ENCODE measurements at regions of chr12 and their contacts with region 1.

Region 1: DNA sequence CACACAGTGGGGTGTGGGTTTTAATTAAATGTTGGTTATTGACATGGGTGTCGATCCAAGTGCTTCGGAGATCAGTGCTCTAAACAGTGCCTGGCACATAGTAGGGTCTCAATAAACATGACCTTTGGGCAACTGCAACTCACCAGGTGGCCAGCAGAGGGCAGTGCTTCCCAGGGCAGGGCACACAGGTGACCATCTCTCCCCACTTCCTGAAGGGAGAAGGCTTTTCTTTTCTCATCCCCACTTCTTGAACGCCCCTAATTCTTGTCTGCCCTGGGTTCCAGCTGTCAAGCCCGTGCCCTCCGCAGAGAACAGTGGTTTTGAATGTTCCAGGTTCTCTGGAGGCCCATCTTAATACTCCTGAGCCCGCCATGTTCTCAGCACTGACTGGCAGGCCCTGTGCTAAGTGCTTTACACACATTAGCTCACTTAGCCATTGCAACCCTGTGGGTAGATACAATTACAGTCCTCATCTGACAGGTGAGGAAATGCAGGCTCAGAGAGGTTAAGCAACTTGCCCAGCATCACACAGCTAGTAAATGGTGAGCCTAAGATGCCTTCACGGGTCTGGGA is 16.3 kb downstream of the RAPGEF3 start:
- DNase-seq: no peak
- ATAC-seq: peak; percentile 20 to 45
- H3K4me3 ChIP-seq: no peak overlapping the region
- H3K27ac ChIP-seq: no peak overlapping the region
- H3K4me1 ChIP-seq: peaks cover 14 to 25% of the 10 kb centered on the region in 2 donors
- H3K27me3 ChIP-seq: no peaks in the 10 kb centered on the region
- CTCF ChIP-seq: peak; percentile 91 to 95 (median 92)
- POLR2A ChIP-seq: no peak

Region 2: GRCh38 chr12:47707905-47708543 is 34.3 kb before region 1 on chr12:
- in situ Hi-C with region 1: no loop called
- intact Hi-C with region 1: no loop called
- DNase-seq: no peak
- ATAC-seq: no peak
- H3K4me3 ChIP-seq: no peak overlapping the region
- H3K27ac ChIP-seq: no peak overlapping the region
- H3K4me1 ChIP-seq: peaks cover 9 to 18% of the 10 kb centered on the region in 2 donors
- H3K27me3 ChIP-seq: no peaks in the 10 kb centered on the region
- CTCF ChIP-seq: no peak
- POLR2A ChIP-seq: no peak

Region 3: DNA sequence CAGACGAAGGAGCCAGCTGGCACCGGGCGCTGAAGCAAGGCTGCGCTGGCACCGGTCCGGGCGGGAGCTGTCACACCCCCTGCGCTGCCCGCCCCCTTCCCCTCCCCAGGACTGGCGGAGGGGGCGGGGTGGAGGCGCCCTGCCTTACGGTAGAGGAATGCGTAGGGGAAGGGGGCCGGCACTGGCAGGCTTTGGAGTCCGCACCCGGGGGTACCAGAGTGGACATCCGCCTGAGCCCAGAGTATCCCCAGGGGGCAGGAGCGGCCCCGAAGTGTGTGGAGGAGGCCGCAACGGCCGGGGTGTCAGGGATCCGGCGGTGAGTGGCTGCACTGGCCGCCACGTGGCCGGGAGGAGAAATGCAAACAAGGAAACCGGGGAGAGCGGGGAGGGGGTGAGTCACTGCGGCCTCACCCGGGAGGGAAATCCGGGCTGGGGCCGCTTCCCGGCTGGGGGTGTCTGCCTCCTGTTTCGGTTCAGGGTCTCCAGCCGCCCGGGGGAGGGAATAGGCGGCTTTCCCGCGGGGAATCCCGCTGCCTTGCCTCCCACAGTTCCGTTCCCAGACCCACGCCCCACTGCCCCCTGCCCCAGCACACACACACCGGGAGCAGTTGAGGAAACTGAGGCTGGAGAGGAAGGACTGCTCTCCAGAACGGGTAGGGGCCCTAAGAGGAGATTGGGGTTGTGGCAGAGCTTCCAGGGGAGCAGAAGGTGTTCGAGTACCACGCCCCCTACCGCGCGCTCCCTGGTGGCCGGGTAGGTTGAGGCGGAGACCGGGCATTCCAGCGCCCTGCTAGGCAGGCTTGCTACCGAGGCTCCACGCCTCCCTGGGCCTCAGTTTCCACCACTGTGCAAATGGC is 16.7 kb after region 1 on chr12 and contains the start of gene RAPGEF3:
- in situ Hi-C with region 1: no loop called
- intact Hi-C with region 1: loop called (anchors 2 kb)
- DNase-seq: peak; percentile 66 to 73
- ATAC-seq: peak; percentile 89
- H3K4me3 ChIP-seq: peak within 1 kb of the TSS; percentile 62 to 91 (median 72)
- H3K27ac ChIP-seq: peak within 1 kb of the TSS; percentile 50 to 90 (median 78)
- H3K4me1 ChIP-seq: peaks cover 16 to 21% of the 10 kb centered on the region in 2 donors
- H3K27me3 ChIP-seq: no peaks in the 10 kb centered on the region
- CTCF ChIP-seq: peak; percentile 28 to 70 (median 63)
- POLR2A ChIP-seq: peak; percentile 7 to 19
- total RNA-seq, gene RAPGEF3: 17.0 to 27.0 (median 22.3) TPM

Region 4: DNA sequence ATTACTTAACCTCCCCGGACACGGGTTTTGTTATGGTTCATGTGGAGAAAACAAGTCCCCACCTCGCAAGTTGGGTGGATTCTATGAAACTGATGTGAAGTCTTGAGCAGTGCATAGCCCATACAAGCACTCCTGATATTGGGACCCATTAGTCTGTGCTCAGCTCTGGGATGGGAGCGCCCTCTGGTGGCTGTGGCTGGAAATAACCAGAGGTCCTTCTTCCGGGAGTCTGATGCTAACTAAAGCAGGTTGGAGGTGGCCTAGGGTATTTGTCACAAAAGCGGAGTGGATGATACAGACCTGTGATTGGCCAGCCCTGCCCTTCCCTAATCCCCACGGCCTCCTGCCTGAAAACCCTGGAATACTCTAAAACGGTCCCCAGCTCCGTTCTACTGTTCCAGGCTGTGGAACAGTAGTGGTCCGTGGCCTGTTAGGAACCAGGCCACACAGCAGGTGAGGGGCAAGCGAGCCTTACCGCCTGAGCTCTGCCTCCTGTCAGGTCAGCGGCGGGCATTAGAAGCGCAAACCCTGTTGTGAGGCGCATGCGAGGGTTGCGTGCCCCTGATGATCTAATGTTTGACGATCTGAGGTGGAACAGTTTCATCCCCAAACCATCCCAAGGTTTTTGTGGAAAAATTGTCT is 37.1 kb after region 1 on chr12:
- in situ Hi-C with region 1: loop called in 1 of 4 experiments (anchors 5 kb)
- intact Hi-C with region 1: loop called (anchors 1 kb)
- DNase-seq: peak; percentile 69 to 81
- ATAC-seq: peak; percentile 74 to 83
- H3K4me3 ChIP-seq: no peak overlapping the region
- H3K27ac ChIP-seq: no peak overlapping the region
- H3K4me1 ChIP-seq: peaks cover 47 to 55% of the 10 kb centered on the region in 2 donors
- H3K27me3 ChIP-seq: no peaks in the 10 kb centered on the region
- CTCF ChIP-seq: peak; percentile 89 to 95 (median 93)
- POLR2A ChIP-seq: no peak

Measured in gastrocnemius medialis (tissue), 4 donors.